Mammary epithelial cell (primary cell): ENCODE measurements at regions of chr13 and their contacts with region 1.

Region 1: DNA sequence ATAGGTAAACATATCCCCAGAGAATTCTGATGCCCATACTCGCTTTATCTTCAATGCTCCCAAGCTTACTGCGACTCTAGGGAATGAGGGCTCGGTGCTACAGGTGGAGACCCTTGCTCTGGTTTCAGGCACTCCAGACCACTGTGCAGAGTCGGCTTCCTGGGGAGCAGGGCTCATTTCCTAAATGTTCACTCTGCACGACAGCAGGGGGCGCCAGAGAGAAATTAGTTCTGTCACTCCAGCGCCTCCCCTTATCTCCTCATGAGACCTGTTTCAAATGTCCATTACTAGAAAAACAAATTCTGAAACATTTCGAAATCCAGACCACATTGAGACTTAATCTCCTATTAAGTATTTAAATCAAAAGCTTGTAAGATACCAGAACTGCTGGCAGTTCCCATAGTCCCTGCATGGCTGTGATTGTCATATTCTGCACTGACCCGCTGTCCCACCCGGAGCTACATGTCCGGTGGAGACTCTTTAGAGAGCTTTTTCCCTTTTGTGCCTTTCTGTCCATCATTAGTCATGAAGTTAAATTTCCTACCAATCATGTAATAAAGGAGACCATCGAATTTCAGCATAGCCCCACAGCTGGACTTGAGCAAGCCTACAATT is 22.4 kb downstream of the EPSTI1 start:
- DNase-seq: peak; percentile 40
- H3K4me3 ChIP-seq: no peak overlapping the region
- H3K27ac ChIP-seq: no peak overlapping the region
- H3K4me1 ChIP-seq: peaks cover 7% of the 10 kb centered on the region
- H3K27me3 ChIP-seq: no peaks in the 10 kb centered on the region
- CTCF ChIP-seq: peak; percentile 84 to 85

Region 2: DNA sequence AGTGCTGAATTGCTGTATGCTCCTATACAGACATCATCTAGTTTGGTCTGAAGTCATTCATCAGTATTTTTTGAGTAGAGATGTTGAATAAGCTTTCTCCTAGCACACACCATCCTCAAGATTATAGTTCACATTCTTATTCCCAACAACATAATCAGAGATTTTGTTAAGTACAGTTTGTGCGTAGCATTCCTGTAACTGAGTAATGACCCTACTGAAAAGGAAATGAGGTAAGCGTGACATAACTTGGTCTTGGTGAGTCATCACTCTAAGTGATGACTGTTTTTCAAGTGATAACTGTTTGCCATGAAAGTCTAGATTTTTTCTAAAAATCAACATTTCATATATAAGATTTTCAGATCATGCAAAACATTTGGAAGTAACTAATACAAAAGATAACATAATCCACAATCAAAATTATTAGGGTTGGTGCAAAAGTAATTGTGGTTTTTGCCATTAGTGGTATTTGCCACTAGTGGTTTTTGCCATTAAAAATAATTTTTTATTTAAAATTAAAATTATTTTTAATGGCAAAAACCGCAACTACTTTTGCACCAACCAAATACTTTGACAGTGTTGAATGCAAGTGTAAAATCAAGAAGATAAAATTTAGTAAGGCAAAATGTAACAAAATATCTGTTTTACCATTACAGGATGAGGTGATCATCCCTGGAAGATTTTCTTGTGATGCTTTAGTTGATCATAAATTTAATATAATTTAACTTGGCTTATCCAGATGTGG is 206.6 kb before region 1 on chr13:
- CTCF ChIA-PET with region 1: interaction called, 23 read pairs
- dilution Hi-C with region 1: no loop called
- in situ Hi-C with region 1: no loop called
- intact Hi-C with region 1: no loop called
- DNase-seq: peak; percentile 60
- H3K4me3 ChIP-seq: no peak overlapping the region
- H3K27ac ChIP-seq: no peak overlapping the region
- H3K4me1 ChIP-seq: peaks cover 7% of the 10 kb centered on the region
- H3K27me3 ChIP-seq: no peaks in the 10 kb centered on the region
- CTCF ChIP-seq: no peak

Region 3: DNA sequence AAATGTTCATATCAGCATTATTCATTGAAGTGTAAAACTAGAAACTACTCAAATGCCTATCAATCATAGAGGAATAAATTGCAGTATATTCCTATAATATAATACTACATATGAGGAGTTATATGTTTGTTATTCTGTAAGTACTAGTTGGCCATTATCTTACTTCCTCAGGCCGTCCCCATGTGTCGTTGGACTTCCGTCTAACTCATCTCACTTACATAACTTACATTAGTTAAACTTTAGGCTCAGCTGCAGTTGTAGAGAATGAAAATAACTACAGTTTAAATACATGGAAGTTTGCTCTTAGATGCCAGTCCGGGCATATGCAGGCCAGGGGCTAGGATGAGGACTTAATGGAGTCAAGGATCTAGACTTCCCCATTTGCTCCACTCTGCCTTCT is 31.0 kb after region 1 on chr13:
- CTCF ChIA-PET with region 1: no interaction called
- dilution Hi-C with region 1: no loop called
- in situ Hi-C with region 1: no loop called
- intact Hi-C with region 1: no loop called
- DNase-seq: no peak
- H3K4me3 ChIP-seq: no peak overlapping the region
- H3K27ac ChIP-seq: no peak overlapping the region
- H3K4me1 ChIP-seq: peaks cover 62% of the 10 kb centered on the region
- H3K27me3 ChIP-seq: no peaks in the 10 kb centered on the region
- CTCF ChIP-seq: no peak

Region 4: DNA sequence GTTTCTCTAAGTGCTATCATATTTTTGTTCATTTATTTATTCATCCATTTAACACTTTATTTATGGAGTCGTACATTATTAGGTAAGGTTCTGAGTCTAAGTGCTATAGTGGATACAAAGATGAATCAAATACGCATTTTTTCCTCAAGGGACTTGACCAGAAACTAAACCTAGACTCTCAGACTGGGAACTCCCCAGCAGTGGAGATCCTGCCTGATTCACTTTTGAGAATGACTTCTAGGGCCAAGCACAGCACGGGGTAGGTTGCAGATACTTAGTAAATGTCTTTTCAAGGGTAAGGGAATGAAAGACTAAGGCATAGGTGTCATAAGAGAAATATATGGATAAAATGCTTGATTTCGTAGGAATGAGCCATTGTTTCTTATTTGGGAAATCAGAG is 60.9 kb after region 1 on chr13:
- CTCF ChIA-PET with region 1: no interaction called
- dilution Hi-C with region 1: no loop called
- in situ Hi-C with region 1: no loop called
- intact Hi-C with region 1: no loop called
- DNase-seq: no peak
- H3K4me3 ChIP-seq: no peak overlapping the region
- H3K27ac ChIP-seq: no peak overlapping the region
- H3K4me1 ChIP-seq: no peaks in the 10 kb centered on the region
- H3K27me3 ChIP-seq: no peaks in the 10 kb centered on the region
- CTCF ChIP-seq: no peak

Region 5: DNA sequence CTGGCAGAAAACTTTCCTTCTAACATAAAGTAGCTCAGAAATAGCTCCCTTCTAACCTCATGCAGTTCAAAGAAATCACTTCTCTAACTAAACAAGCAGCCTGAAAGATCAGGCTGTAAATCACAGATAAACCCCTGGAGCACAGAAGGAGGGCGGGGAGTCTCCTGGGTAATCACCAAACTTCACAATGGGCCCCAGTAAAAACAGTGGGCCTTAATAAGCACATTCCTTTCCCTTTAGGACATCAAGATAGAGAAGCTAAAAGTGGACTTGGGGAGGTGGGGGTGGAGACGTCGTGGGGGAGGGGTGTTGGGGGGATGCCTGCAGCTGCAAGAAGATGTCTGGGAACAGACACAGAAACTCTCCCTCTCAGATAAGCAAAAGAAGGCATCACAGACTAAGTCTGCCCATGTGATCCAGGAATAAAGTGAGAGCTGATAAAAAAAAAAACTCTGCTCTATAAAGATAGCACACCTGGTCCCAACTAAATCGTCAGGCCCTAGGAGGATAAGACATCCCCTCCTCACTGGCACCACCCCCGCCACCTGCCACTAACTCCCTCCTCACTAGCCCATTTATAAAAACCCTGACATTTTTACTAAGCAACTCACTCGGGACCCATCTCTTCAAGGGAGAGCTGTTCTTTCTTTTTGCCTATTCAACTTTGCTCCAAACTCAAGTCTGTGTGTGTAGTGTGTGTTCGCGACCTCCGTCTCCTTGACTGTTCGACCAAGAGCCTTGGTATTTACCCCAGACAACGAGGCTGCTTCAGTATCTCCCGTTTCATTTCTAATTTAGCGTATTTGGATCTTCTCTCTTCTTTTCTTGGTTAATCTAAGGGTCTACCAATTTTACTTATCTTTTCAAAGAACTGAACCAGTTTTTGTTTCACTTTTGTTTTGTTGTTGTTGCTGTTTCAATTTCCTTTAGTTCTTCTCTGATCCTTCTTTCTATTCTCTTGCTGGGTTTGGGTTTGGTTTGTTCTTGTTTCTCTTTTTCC is 85.4 kb after region 1 on chr13:
- CTCF ChIA-PET with region 1: no interaction called
- dilution Hi-C with region 1: no loop called
- in situ Hi-C with region 1: no loop called
- intact Hi-C with region 1: loop called (anchors 2 kb)
- DNase-seq: peak; percentile 32
- H3K4me3 ChIP-seq: peak overlapping the region in 1 of 3 experiments; percentile 6
- H3K27ac ChIP-seq: peak overlapping the region; percentile 62
- H3K4me1 ChIP-seq: peaks cover 44% of the 10 kb centered on the region
- H3K27me3 ChIP-seq: no peaks in the 10 kb centered on the region
- CTCF ChIP-seq: no peak

Region 6: GRCh38 chr13:43132257-43132656 is 162.6 kb after region 1 on chr13:
- CTCF ChIA-PET with region 1: interaction called, 4 read pairs
- dilution Hi-C with region 1: no loop called
- in situ Hi-C with region 1: no loop called
- intact Hi-C with region 1: loop called (anchors 2 kb)
- DNase-seq: peak; percentile 66
- H3K4me3 ChIP-seq: no peak overlapping the region
- H3K27ac ChIP-seq: no peak overlapping the region
- H3K4me1 ChIP-seq: peaks cover 9% of the 10 kb centered on the region
- H3K27me3 ChIP-seq: no peaks in the 10 kb centered on the region
- CTCF ChIP-seq: peak; percentile 35 to 59

Region 7: GRCh38 chr13:43786773-43787517 is 817.3 kb after region 1 on chr13 and contains the start of gene ENOX1:
- CTCF ChIA-PET with region 1: no interaction called
- dilution Hi-C with region 1: no loop called
- in situ Hi-C with region 1: loop called in 1 of 2 experiments (anchors 25 kb)
- intact Hi-C with region 1: no loop called
- DNase-seq: peak; percentile 64
- H3K4me3 ChIP-seq: peak within 1 kb of the TSS; percentile 66 to 73 (median 72)
- H3K27ac ChIP-seq: peak within 1 kb of the TSS; percentile 40
- H3K4me1 ChIP-seq: peaks cover 19% of the 10 kb centered on the region
- H3K27me3 ChIP-seq: no peaks in the 10 kb centered on the region
- CTCF ChIP-seq: peak in 1 of 2 donors; percentile 31
- total RNA-seq, gene ENOX1: 0.17 to 1.2 TPM